ENCODE measurements at regions of chr2 and their contacts with region 1.

Region 1: GRCh38 chr2:145344076-145344724 is 824.3 kb upstream of the ZEB2 start:
- DNase-seq: no peak
- H3K4me3 ChIP-seq: no peak overlapping the region
- H3K27ac ChIP-seq: no peak overlapping the region
- H3K4me1 ChIP-seq: no peaks in the 10 kb centered on the region
- CTCF ChIP-seq: no peak

Region 2: GRCh38 chr2:145329976-145330375 is 14.2 kb before region 1 on chr2:
- CTCF ChIA-PET with region 1: no interaction called
- POLR2A ChIA-PET with region 1: interaction called, 19 read pairs
- intact Hi-C with region 1: no loop called
- DNase-seq: no peak
- H3K4me3 ChIP-seq: no peak overlapping the region
- H3K27ac ChIP-seq: no peak overlapping the region
- H3K4me1 ChIP-seq: peaks cover 6% of the 10 kb centered on the region
- CTCF ChIP-seq: no peak

Region 3: DNA sequence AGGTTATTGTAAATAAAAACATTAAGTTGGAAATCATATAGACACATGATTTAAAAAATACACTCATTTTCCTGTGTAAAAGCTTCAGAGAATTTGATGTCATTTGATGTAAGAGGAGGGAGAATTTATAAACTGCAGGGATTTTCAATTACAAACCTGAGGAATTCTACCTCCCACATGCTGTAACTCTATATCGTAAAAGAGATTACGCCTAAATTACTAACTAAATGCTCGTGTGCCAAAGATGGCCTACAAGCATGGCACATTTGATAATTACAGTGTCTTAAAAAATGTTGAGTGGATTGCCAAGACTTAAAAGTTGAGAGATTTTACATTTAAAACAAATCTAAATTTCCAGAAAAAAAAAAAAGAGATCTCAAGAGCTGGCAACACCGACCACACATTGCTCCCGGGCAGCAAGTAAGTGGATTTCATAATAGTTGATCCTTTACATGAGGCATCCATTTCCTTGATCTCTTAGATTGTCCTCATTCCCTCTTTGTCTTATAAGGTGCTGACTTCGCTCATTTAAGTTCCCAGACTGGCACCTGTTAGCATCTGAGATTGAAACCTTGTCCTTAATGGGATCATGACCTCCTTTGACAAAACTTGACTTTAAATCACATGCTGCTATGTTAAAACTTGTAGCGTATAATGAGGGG is 16.1 kb after region 1 on chr2:
- CTCF ChIA-PET with region 1: no interaction called
- POLR2A ChIA-PET with region 1: interaction called, 7 read pairs
- intact Hi-C with region 1: loop called (anchors 2 kb)
- DNase-seq: no peak
- H3K4me3 ChIP-seq: no peak overlapping the region
- H3K27ac ChIP-seq: no peak overlapping the region
- H3K4me1 ChIP-seq: no peaks in the 10 kb centered on the region
- CTCF ChIP-seq: no peak